CD8-positive, alpha-beta T cell (primary cell): ENCODE measurements at regions of chr4 and their contacts with region 1.

Region 1: GRCh38 chr4:32010221-32010620 is 1290.1 kb downstream of the PCDH7 start:
- DNase-seq: no peak
- ATAC-seq: no peak
- H3K4me3 ChIP-seq: no peak overlapping the region
- H3K4me3 Mint-ChIP-seq: no peak overlapping the region
- H3K27ac ChIP-seq: no peak overlapping the region
- H3K27ac Mint-ChIP-seq: no peak overlapping the region
- H3K4me1 ChIP-seq: no peaks in the 10 kb centered on the region
- H3K4me1 Mint-ChIP-seq: no peaks in the 10 kb centered on the region
- H3K27me3 ChIP-seq: no peaks in the 10 kb centered on the region
- H3K27me3 Mint-ChIP-seq: no peaks in the 10 kb centered on the region
- CTCF ChIP-seq: no peak

Region 2: DNA sequence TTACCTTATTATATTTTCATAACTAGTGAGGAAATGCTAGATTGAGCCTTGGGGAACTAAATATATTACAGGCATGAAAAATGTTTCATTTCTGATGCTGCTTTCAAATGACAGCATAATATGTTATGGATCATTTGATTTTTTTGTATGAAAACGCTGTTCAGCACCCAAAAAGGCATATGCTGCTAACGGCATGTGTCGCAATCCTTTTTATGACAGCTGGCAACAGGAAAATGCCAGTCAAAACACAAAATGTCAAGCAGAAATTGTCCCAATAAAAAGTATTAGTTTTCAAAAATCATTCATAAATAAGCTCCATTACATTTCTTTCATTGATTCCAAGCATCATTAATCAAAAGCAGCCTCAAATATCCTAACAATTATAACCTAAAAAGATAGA is 45.5 kb before region 1 on chr4:
- CTCF ChIA-PET with region 1: no interaction called
- POLR2A ChIA-PET with region 1: no interaction called
- intact Hi-C with region 1: loop called in 1 of 2 experiments (anchors 2 kb)
- DNase-seq: no peak
- ATAC-seq: no peak
- H3K4me3 ChIP-seq: no peak overlapping the region
- H3K4me3 Mint-ChIP-seq: no peak overlapping the region
- H3K27ac ChIP-seq: no peak overlapping the region
- H3K27ac Mint-ChIP-seq: no peak overlapping the region
- H3K4me1 ChIP-seq: no peaks in the 10 kb centered on the region
- H3K4me1 Mint-ChIP-seq: no peaks in the 10 kb centered on the region
- H3K27me3 ChIP-seq: no peaks in the 10 kb centered on the region
- H3K27me3 Mint-ChIP-seq: no peaks in the 10 kb centered on the region
- CTCF ChIP-seq: no peak

Region 3: GRCh38 chr4:32440391-32440790 is 430.2 kb after region 1 on chr4:
- CTCF ChIA-PET with region 1: no interaction called
- POLR2A ChIA-PET with region 1: no interaction called
- intact Hi-C with region 1: no loop called
- DNase-seq: no peak
- ATAC-seq: no peak
- H3K4me3 ChIP-seq: no peak overlapping the region
- H3K4me3 Mint-ChIP-seq: no peak overlapping the region
- H3K27ac ChIP-seq: no peak overlapping the region
- H3K27ac Mint-ChIP-seq: no peak overlapping the region
- H3K4me1 ChIP-seq: no peaks in the 10 kb centered on the region
- H3K4me1 Mint-ChIP-seq: no peaks in the 10 kb centered on the region
- H3K27me3 ChIP-seq: no peaks in the 10 kb centered on the region
- H3K27me3 Mint-ChIP-seq: no peaks in the 10 kb centered on the region
- CTCF ChIP-seq: no peak